ENCODE measurements at regions of chr12 and their contacts with region 1.

Region 1: DNA sequence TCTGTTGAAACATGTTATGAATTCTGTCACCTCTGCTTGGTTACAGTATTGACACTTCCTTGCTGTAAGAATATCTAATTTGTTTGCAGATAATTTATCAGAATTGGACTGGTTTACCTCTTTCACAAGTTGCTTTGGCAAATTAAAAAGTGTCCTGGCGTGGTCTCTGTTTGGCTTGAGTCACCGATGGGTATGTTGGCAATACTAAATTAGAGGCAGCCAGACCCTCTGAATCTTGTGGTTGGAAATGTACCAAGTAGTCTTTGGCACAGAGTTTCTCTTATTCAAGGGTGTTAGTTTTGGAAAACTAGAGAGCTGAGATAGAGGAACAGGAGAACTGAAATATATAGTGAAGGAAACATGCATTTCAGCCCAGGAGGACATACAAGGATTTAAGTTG is 521.1 kb upstream of the MGAT4C start:
- DNase-seq: no peak
- H3K4me3 ChIP-seq: no peak overlapping the region
- H3K27ac ChIP-seq: no peak overlapping the region
- H3K4me1 ChIP-seq: no peaks in the 10 kb centered on the region
- H3K27me3 ChIP-seq: no peaks in the 10 kb centered on the region
- CTCF ChIP-seq: no peak
- POLR2A ChIP-seq: no peak

Region 2: GRCh38 chr12:86727151-86727550 is 50.2 kb before region 1 on chr12:
- intact Hi-C with region 1: loop called (anchors 2 kb)
- DNase-seq: no peak
- H3K4me3 ChIP-seq: no peak overlapping the region
- H3K27ac ChIP-seq: no peak overlapping the region
- H3K4me1 ChIP-seq: no peaks in the 10 kb centered on the region
- H3K27me3 ChIP-seq: no peaks in the 10 kb centered on the region
- CTCF ChIP-seq: no peak
- POLR2A ChIP-seq: no peak